ENCODE measurements at regions of chr7 and their contacts with region 1.

Region 1: DNA sequence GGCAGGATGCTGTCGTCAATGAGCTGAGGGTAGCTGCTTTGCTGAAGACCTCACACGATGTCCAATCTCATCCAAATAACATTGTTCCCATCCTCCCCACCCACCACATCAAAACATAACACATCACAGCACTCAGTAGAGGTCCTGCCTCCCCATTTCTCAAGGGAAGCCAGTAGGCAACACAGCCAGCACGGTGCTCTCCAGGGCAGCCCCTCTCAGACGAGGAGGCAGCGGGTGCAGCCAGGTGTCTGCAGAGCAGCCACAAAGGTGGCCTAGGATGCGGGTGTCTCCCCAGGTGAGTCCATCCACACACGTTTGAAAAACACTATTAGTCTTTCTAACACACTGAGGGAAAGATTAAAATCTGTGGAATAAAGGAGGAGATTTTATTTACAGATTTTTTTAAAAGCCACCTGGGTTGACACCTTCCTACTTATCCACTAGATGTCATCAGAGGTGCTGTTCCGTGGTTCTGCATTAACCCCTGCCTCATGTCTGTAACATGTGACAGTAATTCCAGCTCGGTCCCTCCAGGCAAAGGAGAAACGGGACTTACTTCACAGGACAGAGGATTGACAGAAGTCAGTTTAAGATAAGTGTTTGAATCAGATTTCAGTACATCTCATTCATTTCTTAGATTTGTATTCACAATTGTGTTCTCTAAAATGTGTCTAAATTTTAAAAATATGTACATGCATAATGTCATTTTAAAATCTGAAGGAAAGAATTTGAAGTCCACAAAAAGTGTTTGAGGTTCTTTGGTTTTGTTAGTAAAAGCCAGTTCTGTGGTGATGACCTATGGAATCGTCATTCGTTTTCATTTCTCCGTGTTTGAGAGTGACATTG is 68.0 kb downstream of the LANCL2 start:
- DNase-seq: peak; percentile 40
- ATAC-seq: peak; percentile 94
- H3K4me3 ChIP-seq: no peak overlapping the region
- H3K27ac ChIP-seq: no peak overlapping the region
- H3K4me1 ChIP-seq: no peaks in the 10 kb centered on the region
- H3K27me3 ChIP-seq: no peaks in the 10 kb centered on the region
- CTCF ChIP-seq: peak; percentile 63 to 69 (median 65); a peak in 5 of 6 replicates
- POLR2A ChIP-seq: no peak
- RAD21 ChIP-seq: peak; percentile 78

Region 2: GRCh38 chr7:55593515-55594318 is 160.6 kb after region 1 on chr7:
- CTCF ChIA-PET with region 1: interaction called, 9 read pairs
- POLR2A ChIA-PET with region 1: no interaction called
- RAD21 ChIA-PET with region 1: interaction called in 1 of 2 experiments, 4 read pairs
- intact Hi-C with region 1: loop called (anchors 1 kb)
- DNase-seq: peak; percentile 54
- ATAC-seq: peak; percentile 91
- H3K4me3 ChIP-seq: peak overlapping the region in 1 of 2 experiments; percentile 23; a peak in 1 of 4 replicates
- H3K27ac ChIP-seq: no peak overlapping the region
- H3K4me1 ChIP-seq: peaks cover 5 to 14% of the 10 kb centered on the region in 2 experiments
- H3K27me3 ChIP-seq: no peaks in the 10 kb centered on the region
- CTCF ChIP-seq: peak; percentile 62 to 94 (median 93); a peak in 5 of 6 replicates
- POLR2A ChIP-seq: no peak
- RAD21 ChIP-seq: peak; percentile 75